ENCODE measurements at regions of chr6 and their contacts with region 1.

Region 1: DNA sequence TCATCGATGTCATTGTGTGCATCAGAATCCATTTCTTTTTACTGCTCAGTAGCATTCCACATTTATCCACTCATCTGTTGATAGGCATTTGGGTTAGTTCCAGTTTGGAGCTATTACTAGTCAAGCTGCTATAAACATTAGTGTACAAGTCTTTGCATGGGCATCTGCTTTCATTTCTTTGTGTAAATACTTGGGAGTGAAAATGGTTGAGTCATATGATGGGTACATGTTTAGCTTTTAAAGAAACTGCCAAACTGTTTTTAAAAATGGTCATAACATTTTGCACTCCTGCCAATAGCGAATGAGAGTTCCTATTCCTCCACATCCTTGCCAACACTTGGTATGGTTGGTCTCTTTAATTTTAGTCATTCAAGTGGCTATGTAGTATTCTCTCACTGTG is 21.2 kb upstream of the SLC22A2 start:
- DNase-seq: no peak
- ATAC-seq: no peak
- H3K4me3 ChIP-seq: no peak overlapping the region
- H3K27ac ChIP-seq: no peak overlapping the region
- H3K4me1 ChIP-seq: peaks cover 14 to 16% of the 10 kb centered on the region in 2 donors
- H3K27me3 ChIP-seq: no peaks in the 10 kb centered on the region
- CTCF ChIP-seq: no peak
- POLR2A ChIP-seq: no peak

Region 2: GRCh38 chr6:159125014-159125609 is 1154.7 kb before region 1 on chr6:
- in situ Hi-C with region 1: no loop called
- intact Hi-C with region 1: loop called (anchors 10 kb)
- DNase-seq: no peak
- ATAC-seq: no peak
- H3K4me3 ChIP-seq: no peak overlapping the region
- H3K27ac ChIP-seq: peak overlapping the region; percentile 89 to 93 (median 90)
- H3K4me1 ChIP-seq: peaks cover 16 to 40% of the 10 kb centered on the region in 2 donors
- H3K27me3 ChIP-seq: no peaks in the 10 kb centered on the region
- CTCF ChIP-seq: no peak
- POLR2A ChIP-seq: no peak

Region 3: DNA sequence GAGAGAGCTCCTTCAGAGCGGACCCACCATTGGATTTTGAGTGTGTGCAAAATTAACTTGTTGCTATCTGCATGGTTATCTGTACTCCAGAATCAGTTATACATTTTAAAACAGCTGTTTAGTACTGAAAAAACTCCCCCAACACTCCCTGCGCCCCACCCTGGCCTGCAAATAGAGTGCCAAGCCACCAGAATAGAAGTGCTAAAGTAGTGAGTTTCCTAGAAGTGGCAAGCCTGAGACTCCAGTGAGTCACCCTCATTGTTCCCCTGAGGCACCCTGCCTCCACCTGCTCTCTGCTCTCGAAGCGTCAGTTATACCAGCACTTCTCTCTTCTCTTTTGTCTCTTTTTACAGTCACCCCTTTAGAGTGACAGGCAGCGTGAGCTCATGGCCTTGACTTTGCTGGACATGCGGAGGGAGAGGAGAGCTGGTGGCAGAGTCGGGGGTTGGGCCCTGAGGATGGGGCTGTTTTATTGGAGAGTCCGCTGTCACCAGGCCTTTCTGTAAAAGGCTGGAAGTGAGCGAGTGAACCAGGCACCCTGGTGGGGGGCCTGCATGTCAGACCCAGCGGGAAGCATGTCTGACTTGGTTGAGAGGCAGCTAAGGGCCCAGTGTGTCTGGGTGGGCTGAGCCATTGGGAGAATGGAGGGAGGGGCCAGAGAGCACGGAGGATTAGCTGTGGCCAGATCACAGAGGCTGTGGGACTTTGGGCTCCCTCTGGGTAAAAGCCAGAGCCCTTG is 300.5 kb before region 1 on chr6:
- in situ Hi-C with region 1: no loop called
- intact Hi-C with region 1: loop called (anchors 5 kb)
- DNase-seq: peak; percentile 57 to 79
- ATAC-seq: peak; percentile 63 to 80
- H3K4me3 ChIP-seq: peak overlapping the region in 1 of 4 donors; percentile 31
- H3K27ac ChIP-seq: peak overlapping the region; percentile 89 to 98 (median 96)
- H3K4me1 ChIP-seq: peaks cover 98 to 99% of the 10 kb centered on the region in 2 donors
- H3K27me3 ChIP-seq: no peaks in the 10 kb centered on the region
- CTCF ChIP-seq: no peak
- POLR2A ChIP-seq: peak in 1 of 2 donors; percentile 39

Region 4: GRCh38 chr6:160063771-160064413 is 216.0 kb before region 1 on chr6:
- in situ Hi-C with region 1: no loop called
- intact Hi-C with region 1: loop called (anchors 5 kb)
- DNase-seq: peak; percentile 78 to 85
- ATAC-seq: peak; percentile 91 to 93
- H3K4me3 ChIP-seq: peak overlapping the region in 2 of 4 donors; percentile 23 to 42
- H3K27ac ChIP-seq: peak overlapping the region; percentile 95 to 98 (median 96)
- H3K4me1 ChIP-seq: peaks cover 20 to 39% of the 10 kb centered on the region in 2 donors
- H3K27me3 ChIP-seq: no peaks in the 10 kb centered on the region
- CTCF ChIP-seq: peak in 1 of 5 experiments; percentile 14
- POLR2A ChIP-seq: no peak

Region 5: DNA sequence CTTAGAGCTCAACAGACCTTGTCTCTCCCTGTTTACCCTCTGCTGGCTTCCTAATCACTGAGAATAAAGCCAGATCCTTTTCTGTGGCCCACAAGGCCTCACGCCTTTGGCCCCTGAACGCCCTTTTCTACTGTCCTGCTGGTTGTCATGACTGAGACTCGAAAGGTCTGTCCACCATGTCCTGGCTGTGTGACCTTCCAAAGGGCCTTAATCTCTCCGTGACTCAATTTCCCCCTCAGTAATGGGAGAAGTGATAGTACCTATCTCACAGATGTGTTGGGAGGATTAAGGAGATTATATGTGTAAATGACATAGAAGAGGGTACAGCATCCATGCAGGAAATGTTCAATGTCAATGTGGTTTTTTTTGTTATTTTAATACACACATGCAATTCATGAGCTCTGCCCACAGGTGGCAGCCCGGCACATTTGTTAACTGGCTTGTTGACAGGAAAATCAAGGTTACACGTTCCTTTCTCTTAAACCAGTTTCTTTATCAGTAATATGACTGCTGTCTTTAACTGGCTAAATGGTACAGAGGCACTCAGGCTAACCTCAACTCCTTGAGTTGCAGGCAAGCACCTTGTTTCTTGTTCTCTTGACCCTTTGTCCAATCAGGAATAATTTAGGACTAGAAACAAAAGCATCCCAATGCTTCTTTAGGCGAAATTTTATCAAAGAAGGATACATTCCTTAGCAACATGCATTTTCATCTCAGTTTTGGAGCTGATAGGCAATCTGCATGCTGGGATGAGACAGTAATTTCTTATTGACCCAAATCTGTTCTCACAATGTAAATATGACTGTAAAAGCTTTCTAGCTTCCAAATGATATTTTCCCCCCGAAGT is 141.6 kb before region 1 on chr6:
- in situ Hi-C with region 1: no loop called
- intact Hi-C with region 1: loop called (anchors 10 kb)
- DNase-seq: no peak
- ATAC-seq: peak; percentile 43 to 65
- H3K4me3 ChIP-seq: no peak overlapping the region
- H3K27ac ChIP-seq: peak overlapping the region in 1 of 4 donors; percentile 21
- H3K4me1 ChIP-seq: peaks cover 0 to 19% of the 10 kb centered on the region in 2 donors
- H3K27me3 ChIP-seq: no peaks in the 10 kb centered on the region
- CTCF ChIP-seq: peak; percentile 60 to 74 (median 71)
- POLR2A ChIP-seq: no peak

Region 6: GRCh38 chr6:160202411-160202810 is 77.4 kb before region 1 on chr6:
- in situ Hi-C with region 1: no loop called
- intact Hi-C with region 1: no loop called
- DNase-seq: no peak
- ATAC-seq: no peak
- H3K4me3 ChIP-seq: no peak overlapping the region
- H3K27ac ChIP-seq: no peak overlapping the region
- H3K4me1 ChIP-seq: no peaks in the 10 kb centered on the region
- H3K27me3 ChIP-seq: no peaks in the 10 kb centered on the region
- CTCF ChIP-seq: no peak
- POLR2A ChIP-seq: no peak

Region 7: GRCh38 chr6:160328447-160328846 is 48.6 kb after region 1 on chr6:
- in situ Hi-C with region 1: no loop called
- intact Hi-C with region 1: loop called (anchors 1 kb)
- DNase-seq: peak in 1 of 2 donors; percentile 79
- ATAC-seq: peak; percentile 62 to 92
- H3K4me3 ChIP-seq: no peak overlapping the region
- H3K27ac ChIP-seq: peak overlapping the region in 3 of 4 donors; percentile 35 to 75 (median 50)
- H3K4me1 ChIP-seq: peaks cover 0 to 16% of the 10 kb centered on the region in 2 donors
- H3K27me3 ChIP-seq: no peaks in the 10 kb centered on the region
- CTCF ChIP-seq: no peak
- POLR2A ChIP-seq: no peak

Region 8: DNA sequence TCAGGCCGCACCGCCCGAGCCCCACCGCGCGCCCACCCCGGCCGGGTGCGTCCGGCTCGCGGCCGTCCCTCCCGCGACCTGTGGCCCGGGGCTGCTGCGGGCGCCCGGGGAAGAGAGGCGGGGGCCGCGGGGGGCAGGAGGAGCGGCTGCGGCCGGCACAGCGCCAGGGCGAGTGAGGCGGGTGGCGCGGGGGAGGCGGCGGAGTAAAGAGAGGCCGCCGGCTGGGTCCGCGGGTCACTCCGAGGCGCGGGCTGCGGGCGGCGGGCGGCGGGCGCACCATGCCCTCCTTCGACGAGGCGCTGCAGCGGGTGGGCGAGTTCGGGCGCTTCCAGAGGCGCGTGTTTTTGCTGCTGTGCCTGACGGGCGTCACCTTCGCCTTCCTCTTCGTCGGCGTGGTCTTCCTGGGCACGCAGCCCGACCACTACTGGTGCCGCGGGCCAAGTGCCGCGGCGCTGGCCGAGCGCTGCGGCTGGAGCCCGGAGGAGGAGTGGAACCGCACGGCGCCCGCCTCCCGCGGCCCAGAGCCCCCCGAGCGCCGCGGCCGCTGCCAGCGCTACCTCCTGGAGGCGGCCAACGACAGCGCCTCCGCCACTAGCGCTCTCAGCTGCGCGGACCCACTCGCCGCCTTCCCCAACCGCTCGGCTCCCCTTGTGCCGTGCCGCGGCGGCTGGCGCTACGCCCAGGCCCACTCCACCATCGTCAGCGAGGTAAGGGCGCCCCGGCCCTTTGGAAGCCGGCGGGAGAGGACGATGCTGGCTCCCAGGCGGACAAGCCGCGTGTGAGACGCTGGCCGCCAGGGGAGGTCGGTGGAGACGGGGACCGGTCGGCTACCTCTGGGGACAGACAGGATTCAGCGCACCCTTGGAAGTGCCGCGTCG is 68.5 kb after region 1 on chr6 and contains the start of gene SLC22A3:
- in situ Hi-C with region 1: no loop called
- intact Hi-C with region 1: loop called (anchors 2 kb)
- DNase-seq: peak in 1 of 2 donors; percentile 55
- ATAC-seq: peak; percentile 71 to 77
- H3K4me3 ChIP-seq: peak within 1 kb of the TSS; percentile 77 to 96 (median 84)
- H3K27ac ChIP-seq: peak within 1 kb of the TSS; percentile 84 to 95 (median 89)
- H3K4me1 ChIP-seq: peaks cover 4% of the 10 kb centered on the region in 2 donors
- H3K27me3 ChIP-seq: peaks cover 0 to 9% (median 3%) of the 10 kb centered on the region in 3 donors
- CTCF ChIP-seq: peak in 3 of 5 experiments; percentile 24 to 42 (median 40)
- POLR2A ChIP-seq: peak; percentile 71 to 73
- total RNA-seq, gene SLC22A3: 49.5 to 75.4 (median 58.2) TPM

Region 9: DNA sequence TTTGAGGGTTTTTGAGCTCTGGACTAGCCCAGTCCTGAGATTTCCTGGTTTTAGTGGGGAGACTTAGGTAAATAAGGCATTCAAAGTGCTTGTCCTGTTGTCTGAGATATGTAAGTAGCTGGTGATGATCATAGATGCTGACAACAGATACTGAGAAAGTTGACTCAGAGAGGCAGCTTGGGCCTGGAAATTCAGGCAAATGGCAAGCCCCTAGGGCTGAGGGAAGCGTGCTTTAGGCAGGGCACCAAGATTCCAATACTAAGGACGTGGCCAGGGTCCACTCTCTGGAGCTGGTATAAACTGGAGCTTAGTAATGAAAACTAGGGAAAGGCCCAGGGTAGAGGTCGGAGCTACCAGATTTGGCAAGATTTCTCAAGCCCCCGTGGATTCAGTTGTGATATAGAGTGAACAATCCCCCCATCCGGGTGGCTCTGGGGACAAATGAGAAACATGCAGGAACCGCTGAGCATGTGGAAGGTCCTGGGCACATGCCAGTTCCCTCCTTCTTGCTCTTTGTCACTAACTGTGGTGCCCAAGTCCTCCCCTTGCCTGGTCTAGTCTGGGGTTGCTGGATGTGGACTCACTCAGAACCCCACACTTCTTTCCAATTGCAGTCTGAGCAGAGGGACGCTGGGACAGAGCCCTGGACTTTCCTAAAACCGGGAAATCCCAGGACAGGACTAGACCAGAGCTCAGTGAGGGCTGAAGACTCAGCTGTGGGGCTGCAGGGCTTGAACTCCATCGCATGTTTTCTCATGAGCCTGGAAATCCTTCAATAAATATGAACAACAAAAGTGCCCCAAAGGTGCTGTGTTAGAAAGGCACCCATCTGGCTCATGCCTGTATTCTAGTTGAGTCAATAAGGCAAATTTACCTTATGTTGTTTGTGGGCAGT is 78.6 kb after region 1 on chr6:
- in situ Hi-C with region 1: no loop called
- intact Hi-C with region 1: no loop called
- DNase-seq: no peak
- ATAC-seq: no peak
- H3K4me3 ChIP-seq: no peak overlapping the region
- H3K27ac ChIP-seq: peak overlapping the region in 3 of 4 donors; percentile 77 to 95 (median 84)
- H3K4me1 ChIP-seq: peaks cover 29 to 44% of the 10 kb centered on the region in 2 donors
- H3K27me3 ChIP-seq: no peaks in the 10 kb centered on the region
- CTCF ChIP-seq: no peak
- POLR2A ChIP-seq: no peak

Measured in gastrocnemius medialis (tissue), 4 donors.